ENCODE measurements at regions of chr2 and their contacts with region 1.

Region 1: GRCh38 chr2:64644177-64645004 is 9.3 kb downstream of the SERTAD2 start:
- DNase-seq: peak in 34 of 35 experiments; percentile 24 to 72 (median 44)
- ATAC-seq: peak; percentile 79 to 82 (median 80)
- H3K4me3 ChIP-seq: peak overlapping the region; percentile 27 to 60
- H3K4me3 Mint-ChIP-seq: peak overlapping the region; percentile 81 to 82 (median 82)
- H3K27ac ChIP-seq: peak overlapping the region; percentile 56
- H3K27ac Mint-ChIP-seq: peak overlapping the region; percentile 87 to 89
- H3K4me1 ChIP-seq: peaks cover 46 to 53% of the 10 kb centered on the region in 2 experiments
- H3K4me1 Mint-ChIP-seq: peaks cover 86 to 95% (median 90%) of the 10 kb centered on the region in 3 donors
- H3K27me3 ChIP-seq: no peaks in the 10 kb centered on the region
- H3K27me3 Mint-ChIP-seq: no peaks in the 10 kb centered on the region

Region 2: DNA sequence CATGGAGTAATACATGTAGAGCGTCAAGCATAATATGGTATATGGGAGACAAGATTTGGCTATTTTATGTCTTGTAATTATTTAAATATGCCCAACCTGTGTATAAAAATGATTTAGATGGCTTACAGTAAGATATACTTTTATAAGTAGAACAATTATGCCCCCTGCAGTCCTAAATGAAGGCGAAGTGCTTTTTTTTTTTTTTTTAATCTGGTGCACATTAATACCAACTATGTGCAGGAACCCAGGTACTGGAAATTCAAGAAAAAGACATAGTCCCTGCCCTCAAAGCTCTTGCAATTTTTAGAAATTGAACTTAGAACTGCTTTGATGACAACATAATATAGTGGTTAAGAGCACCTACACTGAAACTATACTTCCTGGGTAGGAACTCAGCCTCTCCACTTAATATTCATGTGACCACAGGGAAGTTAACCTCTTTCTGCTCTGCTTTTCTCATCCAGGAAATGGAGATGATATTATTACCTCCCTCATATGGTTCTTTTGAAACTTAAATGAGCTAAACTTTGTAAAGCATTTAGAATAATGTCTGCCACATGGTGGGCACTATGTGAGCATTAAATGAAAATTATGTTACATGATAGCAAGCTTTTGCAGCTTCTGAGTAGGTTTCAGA is 82.1 kb before region 1 on chr2:
- CTCF ChIA-PET with region 1: no interaction called
- POLR2A ChIA-PET with region 1: no interaction called
- DNase-seq: peak in 3 of 35 experiments; percentile 3 to 59 (median 7)
- ATAC-seq: peak in 2 of 4 experiments; percentile 47 to 79
- H3K4me3 ChIP-seq: no peak overlapping the region
- H3K4me3 Mint-ChIP-seq: no peak overlapping the region
- H3K27ac ChIP-seq: no peak overlapping the region
- H3K27ac Mint-ChIP-seq: peak overlapping the region in 1 of 2 donors; percentile 48
- H3K4me1 ChIP-seq: peaks cover 3 to 12% of the 10 kb centered on the region in 2 experiments
- H3K4me1 Mint-ChIP-seq: peaks cover 27 to 32% (median 30%) of the 10 kb centered on the region in 3 donors
- H3K27me3 ChIP-seq: no peaks in the 10 kb centered on the region
- H3K27me3 Mint-ChIP-seq: no peaks in the 10 kb centered on the region

Region 3: GRCh38 chr2:64666810-64667438 is 22.5 kb after region 1 on chr2:
- CTCF ChIA-PET with region 1: interaction called in 1 of 2 experiments, 15 read pairs
- POLR2A ChIA-PET with region 1: interaction called in 1 of 2 experiments, 3 read pairs
- DNase-seq: peak in 1 of 35 experiments; percentile 37
- ATAC-seq: peak; percentile 76 to 95 (median 89)
- H3K4me3 ChIP-seq: peak overlapping the region in 1 of 2 donors; percentile 29
- H3K4me3 Mint-ChIP-seq: peak overlapping the region in 2 of 3 donors; percentile 15 to 40
- H3K27ac ChIP-seq: peak overlapping the region; percentile 72
- H3K27ac Mint-ChIP-seq: peak overlapping the region in 1 of 2 donors; percentile 97
- H3K4me1 ChIP-seq: peaks cover 18 to 50% of the 10 kb centered on the region in 2 experiments
- H3K4me1 Mint-ChIP-seq: peaks cover 28 to 44% (median 30%) of the 10 kb centered on the region in 3 donors
- H3K27me3 ChIP-seq: no peaks in the 10 kb centered on the region
- H3K27me3 Mint-ChIP-seq: no peaks in the 10 kb centered on the region

Region 4: GRCh38 chr2:64681479-64681967 is 37.1 kb after region 1 on chr2:
- CTCF ChIA-PET with region 1: no interaction called
- POLR2A ChIA-PET with region 1: no interaction called
- DNase-seq: no peak
- ATAC-seq: no peak
- H3K4me3 ChIP-seq: no peak overlapping the region
- H3K4me3 Mint-ChIP-seq: no peak overlapping the region
- H3K27ac ChIP-seq: no peak overlapping the region
- H3K27ac Mint-ChIP-seq: no peak overlapping the region
- H3K4me1 ChIP-seq: peaks cover 6 to 22% of the 10 kb centered on the region in 2 experiments
- H3K4me1 Mint-ChIP-seq: peaks cover 26 to 36% (median 30%) of the 10 kb centered on the region in 3 donors
- H3K27me3 ChIP-seq: no peaks in the 10 kb centered on the region
- H3K27me3 Mint-ChIP-seq: no peaks in the 10 kb centered on the region

Measured in T-cell (primary cell).